Kidney (tissue), 22 donors: ENCODE measurements at regions of chr1 and their contacts with region 1.

Region 1: DNA sequence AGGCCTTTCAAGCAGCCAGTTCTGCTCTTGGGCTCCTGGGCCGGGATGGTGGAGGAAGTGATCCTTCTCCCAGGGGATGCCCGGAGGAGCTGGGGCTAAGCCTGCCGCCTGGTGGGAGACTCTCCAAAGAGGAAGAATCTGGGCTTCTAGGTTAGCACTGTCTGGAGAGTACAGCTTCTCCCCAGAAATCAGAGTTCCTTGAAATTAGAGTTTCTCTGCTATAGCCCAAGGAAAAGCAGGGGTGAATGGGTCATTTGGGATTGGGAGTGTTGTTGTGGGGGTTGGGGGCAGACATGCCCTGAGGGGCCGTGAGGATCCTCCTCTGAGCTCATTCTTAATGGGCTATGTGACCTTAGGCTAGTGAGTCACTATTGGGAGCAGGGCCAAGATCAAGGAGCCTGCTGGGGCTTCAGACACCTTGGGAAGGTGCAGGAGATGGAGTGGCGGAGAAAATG is 6.5 kb downstream of the LGR6 start:
- DNase-seq: no peak
- H3K4me3 ChIP-seq: no peak overlapping the region
- H3K27ac ChIP-seq: no peak overlapping the region
- H3K4me1 ChIP-seq: no peaks in the 10 kb centered on the region
- H3K27me3 ChIP-seq: no peaks in the 10 kb centered on the region
- CTCF ChIP-seq: no peak

Region 2: GRCh38 chr1:202112839-202113672 is 87.1 kb before region 1 on chr1:
- intact Hi-C with region 1: no loop called
- DNase-seq: peak in 2 of 5 donors; percentile 53 to 88
- H3K4me3 ChIP-seq: no peak overlapping the region
- H3K27ac ChIP-seq: peak overlapping the region; percentile 38 to 67
- H3K4me1 ChIP-seq: peaks cover 0 to 23% (median 20%) of the 10 kb centered on the region in 3 donors
- H3K27me3 ChIP-seq: no peaks in the 10 kb centered on the region
- CTCF ChIP-seq: no peak

Region 3: DNA sequence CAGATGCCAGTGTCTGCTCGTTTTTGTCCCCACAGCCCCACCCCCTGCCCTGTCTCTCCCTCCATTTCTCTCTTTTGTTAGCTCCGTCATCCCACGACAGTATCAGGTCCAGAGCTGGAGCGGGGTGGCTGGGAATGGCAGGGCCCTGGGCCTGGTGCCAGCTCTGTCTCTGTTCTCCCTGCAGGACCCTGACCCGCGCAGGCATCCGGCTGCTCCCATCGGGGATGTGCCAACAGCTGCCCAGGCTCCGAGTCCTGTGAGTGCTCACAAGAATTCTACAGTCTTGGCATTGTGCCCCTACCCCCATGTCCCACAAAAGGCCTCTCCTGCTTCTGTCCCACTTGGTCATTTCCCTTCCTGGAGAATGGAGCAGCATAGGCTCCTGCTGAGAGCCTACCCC is 104.2 kb after region 1 on chr1:
- intact Hi-C with region 1: no loop called
- DNase-seq: no peak
- H3K4me3 ChIP-seq: no peak overlapping the region
- H3K27ac ChIP-seq: no peak overlapping the region
- H3K4me1 ChIP-seq: no peaks in the 10 kb centered on the region
- H3K27me3 ChIP-seq: no peaks in the 10 kb centered on the region
- CTCF ChIP-seq: no peak

Region 4: DNA sequence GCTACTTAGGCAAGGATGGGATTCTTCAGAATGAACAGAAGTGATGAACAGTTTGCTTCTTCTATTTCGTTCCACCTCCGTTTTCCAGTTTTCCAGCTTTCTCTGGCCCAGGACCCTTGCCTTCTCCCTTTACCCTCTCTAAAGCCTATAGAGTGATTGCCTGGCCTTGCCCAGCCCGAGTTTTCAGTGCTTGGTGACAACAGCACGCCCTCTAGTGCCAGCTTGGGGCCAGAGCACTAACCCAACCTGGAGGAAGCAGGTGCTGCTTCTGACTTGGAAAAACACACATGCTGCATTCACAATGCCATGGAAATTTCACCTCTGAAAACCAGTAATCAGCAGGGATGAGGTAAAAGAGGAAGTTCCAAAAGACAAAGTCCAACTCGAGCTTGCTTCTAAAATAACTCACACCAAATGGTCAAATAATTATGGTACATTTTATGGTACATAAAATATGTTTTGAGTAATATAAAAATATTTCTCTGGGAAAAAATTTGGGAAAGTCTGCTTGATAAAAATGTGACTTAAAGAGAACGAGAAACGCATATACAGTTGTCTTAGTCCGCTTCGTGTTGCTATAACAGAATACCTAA is 115.5 kb after region 1 on chr1:
- intact Hi-C with region 1: loop called (anchors 5 kb)
- DNase-seq: peak; percentile 85 to 91 (median 90)
- H3K4me3 ChIP-seq: no peak overlapping the region
- H3K27ac ChIP-seq: no peak overlapping the region
- H3K4me1 ChIP-seq: no peaks in the 10 kb centered on the region
- H3K27me3 ChIP-seq: no peaks in the 10 kb centered on the region
- CTCF ChIP-seq: peak; percentile 92